ENCODE measurements at regions of chr19 and their contacts with region 1.

Region 1: DNA sequence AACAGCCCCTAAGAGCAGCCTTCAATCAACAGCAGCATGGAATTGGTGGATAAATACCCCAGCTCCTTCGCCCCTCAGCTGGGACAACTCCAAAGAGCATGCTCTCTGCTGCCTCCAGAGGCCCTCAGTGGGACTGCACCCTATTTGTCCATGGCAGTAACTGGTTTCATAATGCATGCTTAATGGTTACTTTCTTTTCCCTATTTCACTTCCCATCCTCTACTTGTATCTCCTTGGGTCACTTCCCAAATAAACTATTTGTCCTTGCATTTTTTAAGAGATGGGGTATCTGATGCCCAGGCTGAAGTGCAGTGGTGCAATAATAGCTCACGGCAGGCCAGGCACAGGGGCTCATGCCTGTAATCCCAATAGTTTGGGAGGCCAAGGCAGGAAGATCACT is 13.5 kb upstream of the TPM4 start:
- DNase-seq: peak; percentile 68
- CTCF ChIP-seq: peak; percentile 76

Region 2: GRCh38 chr19:16018801-16019551 is 43.8 kb before region 1 on chr19:
- CTCF ChIA-PET with region 1: no interaction called
- POLR2A ChIA-PET with region 1: no interaction called
- DNase-seq: no peak
- CTCF ChIP-seq: no peak

Region 3: GRCh38 chr19:16041299-16041990 is 21.3 kb before region 1 on chr19:
- CTCF ChIA-PET with region 1: interaction called, 25 read pairs
- POLR2A ChIA-PET with region 1: interaction called, 5 read pairs
- DNase-seq: peak; percentile 86
- CTCF ChIP-seq: peak; percentile 93

Region 4: GRCh38 chr19:16076154-16076957 is 13.6 kb after region 1 on chr19 and contains the start of gene TPM4:
- CTCF ChIA-PET with region 1: interaction called, 69 read pairs
- POLR2A ChIA-PET with region 1: no interaction called
- DNase-seq: peak; percentile 90
- CTCF ChIP-seq: no peak

Region 5: GRCh38 chr19:16088351-16089009 is 25.7 kb after region 1 on chr19:
- CTCF ChIA-PET with region 1: interaction called, 17 read pairs
- POLR2A ChIA-PET with region 1: no interaction called
- DNase-seq: no peak
- CTCF ChIP-seq: no peak

Measured in GM10248 (cell line).